HEK293T (cell line): ENCODE measurements at regions of chr3 and their contacts with region 1.

Region 1: DNA sequence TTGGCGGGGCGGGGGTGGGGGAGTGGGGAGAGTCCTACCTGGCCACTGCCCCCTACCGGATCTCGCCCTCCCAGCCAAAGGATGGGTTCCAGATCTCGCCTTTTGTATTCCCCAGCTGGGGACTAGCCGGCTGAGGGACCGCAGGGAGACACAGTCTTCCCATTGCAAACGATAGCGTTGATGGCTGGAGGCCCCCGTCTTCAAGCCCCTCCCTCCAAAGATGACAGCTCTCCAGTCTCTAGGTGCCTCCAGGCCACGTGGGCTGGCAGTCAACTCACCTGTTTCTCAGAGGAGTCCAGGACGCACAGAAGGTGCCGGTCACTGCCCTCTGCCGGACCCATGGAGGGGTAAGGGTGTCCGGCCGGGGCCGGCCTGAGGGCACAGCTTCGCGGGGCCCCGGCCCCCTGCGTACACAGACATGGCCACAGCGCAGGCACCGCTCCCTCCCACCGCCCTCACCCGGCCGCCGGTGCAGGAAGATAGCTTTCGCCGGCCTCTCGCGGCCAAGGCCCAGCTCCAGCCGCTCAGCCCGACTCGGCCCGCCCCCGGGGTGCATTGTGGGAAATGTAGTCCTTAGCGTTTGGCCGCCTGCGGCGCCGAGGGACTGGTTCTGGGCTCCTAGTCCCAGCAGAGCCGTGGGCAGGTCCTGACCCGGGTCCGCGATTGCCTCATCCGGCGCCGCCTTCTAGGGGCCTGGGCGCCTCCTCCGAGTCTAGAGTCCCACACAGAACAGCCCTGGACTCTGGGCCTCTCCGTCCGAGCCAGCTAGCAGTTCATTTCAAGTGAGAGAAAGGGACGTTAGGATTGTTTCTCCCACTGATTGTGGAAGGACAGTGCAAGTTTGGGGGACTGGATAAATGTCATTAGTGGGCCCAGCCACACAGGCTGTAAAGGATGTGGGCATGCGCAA is at the start of gene MON1A:
- DNase-seq: peak; percentile 89

Region 2: GRCh38 chr3:49867871-49868321 is 61.7 kb before region 1 on chr3:
- CTCF ChIA-PET with region 1: no interaction called
- POLR2A ChIA-PET with region 1: interaction called, 11 read pairs
- DNase-seq: no peak

Region 3: GRCh38 chr3:49916686-49917085 is 12.9 kb before region 1 on chr3:
- CTCF ChIA-PET with region 1: no interaction called
- POLR2A ChIA-PET with region 1: interaction called, 21 read pairs
- DNase-seq: no peak

Region 4: DNA sequence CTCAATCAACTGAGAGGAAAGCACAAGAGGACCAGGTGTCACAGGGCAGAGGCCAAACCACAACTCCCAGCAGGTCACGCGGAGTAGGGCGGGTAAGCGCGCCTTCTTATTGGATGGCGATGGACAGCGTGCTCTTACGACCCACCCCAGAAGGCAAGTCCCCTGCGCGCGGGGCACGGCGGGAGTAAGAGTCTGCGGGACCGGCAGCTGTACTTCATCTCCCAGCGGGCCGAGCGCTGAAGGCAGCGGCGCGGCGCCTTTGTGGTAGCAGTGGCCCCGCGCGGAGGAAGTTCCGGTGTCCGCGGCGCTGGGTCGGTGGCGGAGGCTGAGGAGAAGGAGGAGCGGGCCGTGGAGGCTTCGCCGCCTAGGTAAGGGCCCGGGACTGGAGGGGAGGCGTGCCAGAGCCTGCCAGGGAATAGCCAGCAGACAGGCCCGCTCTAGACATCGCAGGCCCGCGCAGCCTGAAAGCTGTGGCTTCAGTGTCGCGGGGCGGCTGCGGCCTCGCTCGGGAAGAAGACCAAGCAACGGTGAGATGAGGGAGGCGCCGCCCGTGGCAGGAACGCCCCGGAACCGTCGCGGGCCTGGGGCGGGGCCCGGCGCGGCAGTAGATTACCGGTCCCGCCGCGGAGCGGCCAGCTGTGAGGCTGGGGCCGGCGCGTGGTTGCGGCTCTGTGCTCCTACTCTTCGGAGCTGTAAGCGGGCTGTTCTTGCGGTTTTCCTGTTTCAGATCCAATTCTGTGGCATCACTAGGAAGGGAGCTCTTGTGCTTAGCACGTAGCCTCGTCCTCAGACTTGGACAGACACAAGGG is 10.5 kb after region 1 on chr3 and contains the start of gene RBM6:
- CTCF ChIA-PET with region 1: interaction called, 3 read pairs
- POLR2A ChIA-PET with region 1: interaction called, 72 read pairs
- DNase-seq: peak; percentile 96